Heart left ventricle (tissue), 16 donors: ENCODE measurements at regions of chr17 and their contacts with region 1.

Region 1: DNA sequence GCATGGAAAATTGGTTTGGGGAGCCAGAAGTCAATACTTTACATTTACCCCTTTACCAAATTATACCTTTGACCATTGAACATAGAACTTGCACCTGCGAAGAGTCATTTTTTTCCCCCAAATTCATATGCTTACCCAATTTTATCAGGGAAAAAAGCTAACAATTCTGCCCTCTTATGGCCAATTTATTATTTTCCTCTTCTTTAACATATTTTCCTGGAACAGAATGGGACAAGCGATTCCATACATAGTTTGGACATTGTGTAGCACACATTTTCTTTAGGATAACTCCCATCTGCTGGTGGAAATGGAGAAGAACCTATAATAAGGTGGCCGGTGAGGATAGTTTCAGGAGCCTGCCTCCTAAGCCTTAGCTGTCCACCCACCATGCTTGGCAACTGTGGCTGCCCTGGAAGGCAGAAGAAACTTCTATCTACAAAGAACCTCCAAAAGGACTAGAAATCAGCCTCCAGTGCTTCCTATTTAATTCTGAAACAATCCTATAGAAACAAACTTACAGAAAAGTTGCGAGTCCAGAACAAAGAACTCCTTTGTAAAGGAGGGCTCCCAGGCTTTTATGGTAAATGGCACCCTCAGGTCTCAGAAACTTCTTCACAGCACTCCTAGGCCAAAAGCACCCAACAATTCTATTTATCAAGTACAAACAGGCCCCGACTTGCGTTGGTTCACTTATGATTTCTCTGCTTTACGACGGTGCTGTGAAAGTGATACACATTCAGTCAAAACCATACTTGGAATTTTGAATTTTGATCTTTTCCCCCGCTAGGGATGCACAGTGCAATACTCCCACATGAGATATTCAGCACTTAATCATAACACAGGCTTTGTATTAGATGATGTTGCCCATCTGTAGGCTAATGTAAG is 64.1 kb upstream of the CACNG4 start:
- DNase-seq: no peak
- ATAC-seq: no peak
- H3K4me3 ChIP-seq: no peak overlapping the region
- H3K27ac ChIP-seq: no peak overlapping the region
- H3K4me1 ChIP-seq: peaks cover 0 to 9% (median 6%) of the 10 kb centered on the region in 12 donors
- H3K27me3 ChIP-seq: peaks cover 0 to 15% (median 0%) of the 10 kb centered on the region in 9 donors
- CTCF ChIP-seq: peak in 7 of 12 donors; percentile 5 to 37 (median 24)
- POLR2A ChIP-seq: no peak

Region 2: GRCh38 chr17:66737524-66737923 is 162.8 kb before region 1 on chr17:
- intact Hi-C with region 1: loop called in 1 of 10 experiments (anchors 5 kb)
- DNase-seq: peak in 4 of 5 donors; percentile 33 to 62 (median 56)
- ATAC-seq: peak; percentile 92 to 97 (median 96)
- H3K4me3 ChIP-seq: no peak overlapping the region
- H3K27ac ChIP-seq: peak overlapping the region in 1 of 12 donors; percentile 28
- H3K4me1 ChIP-seq: peaks cover 0 to 9% (median 0%) of the 10 kb centered on the region in 12 donors
- H3K27me3 ChIP-seq: no peaks in the 10 kb centered on the region
- CTCF ChIP-seq: peak in 9 of 12 donors; percentile 22 to 62 (median 36)
- POLR2A ChIP-seq: no peak

Region 3: DNA sequence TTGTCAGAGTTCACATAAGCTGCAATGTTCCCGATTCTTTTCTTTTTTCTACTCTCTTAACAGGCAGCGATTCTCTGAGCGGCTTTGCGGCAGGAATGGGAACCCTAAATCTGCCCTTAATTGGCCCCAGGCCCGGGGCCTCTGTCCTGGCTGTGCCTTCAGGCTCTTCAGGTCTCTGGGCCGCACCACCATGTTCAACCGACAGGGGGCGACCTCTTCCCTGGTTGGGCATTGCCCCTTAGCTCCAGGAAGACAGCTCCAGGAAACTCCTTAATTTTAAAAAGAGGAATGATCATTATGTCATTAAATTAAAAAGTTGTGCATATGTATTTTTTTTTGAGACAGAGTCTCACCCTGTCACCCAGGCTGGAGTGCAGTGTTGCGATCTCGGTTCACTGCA is 45.2 kb before region 1 on chr17:
- intact Hi-C with region 1: no loop called
- DNase-seq: no peak
- ATAC-seq: no peak
- H3K4me3 ChIP-seq: no peak overlapping the region
- H3K27ac ChIP-seq: no peak overlapping the region
- H3K4me1 ChIP-seq: peaks cover 0 to 8% (median 0%) of the 10 kb centered on the region in 12 donors
- H3K27me3 ChIP-seq: no peaks in the 10 kb centered on the region
- CTCF ChIP-seq: peak in 4 of 12 donors; percentile 12 to 23 (median 20)
- POLR2A ChIP-seq: no peak

Region 4: DNA sequence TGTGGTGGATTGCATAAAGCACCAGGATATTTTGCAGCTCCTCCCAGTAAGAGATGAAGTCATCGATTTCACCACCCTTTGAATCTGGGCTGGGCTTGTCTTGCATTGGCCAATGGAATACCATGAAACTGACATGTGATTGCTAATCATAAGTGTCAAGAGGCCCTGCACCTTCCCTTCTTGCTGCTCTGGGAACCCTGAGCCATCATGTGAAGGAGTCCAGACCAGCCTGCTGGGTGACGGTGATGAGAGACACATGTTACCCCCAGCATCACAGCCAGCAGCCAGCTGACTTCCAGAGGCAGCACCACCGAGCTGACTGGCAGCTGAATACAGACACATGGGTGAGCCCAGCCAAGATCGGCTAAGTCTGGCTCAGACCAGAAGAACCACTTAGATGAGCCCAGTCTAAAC is 20.6 kb after region 1 on chr17:
- intact Hi-C with region 1: no loop called
- DNase-seq: no peak
- ATAC-seq: no peak
- H3K4me3 ChIP-seq: no peak overlapping the region
- H3K27ac ChIP-seq: no peak overlapping the region
- H3K4me1 ChIP-seq: no peaks in the 10 kb centered on the region
- H3K27me3 ChIP-seq: peaks cover 0 to 18% (median 0%) of the 10 kb centered on the region in 9 donors
- CTCF ChIP-seq: no peak
- POLR2A ChIP-seq: no peak

Region 5: GRCh38 chr17:67615011-67615561 is 714.7 kb after region 1 on chr17:
- intact Hi-C with region 1: no loop called
- DNase-seq: no peak
- ATAC-seq: peak in 3 of 4 donors; percentile 14 to 71 (median 41)
- H3K4me3 ChIP-seq: no peak overlapping the region
- H3K27ac ChIP-seq: peak overlapping the region in 2 of 12 donors; percentile 20 to 38
- H3K4me1 ChIP-seq: peaks cover 0 to 14% (median 0%) of the 10 kb centered on the region in 12 donors
- H3K27me3 ChIP-seq: no peaks in the 10 kb centered on the region
- CTCF ChIP-seq: no peak
- POLR2A ChIP-seq: no peak